ENCODE measurements at regions of chr13 and their contacts with region 1.

Region 1: DNA sequence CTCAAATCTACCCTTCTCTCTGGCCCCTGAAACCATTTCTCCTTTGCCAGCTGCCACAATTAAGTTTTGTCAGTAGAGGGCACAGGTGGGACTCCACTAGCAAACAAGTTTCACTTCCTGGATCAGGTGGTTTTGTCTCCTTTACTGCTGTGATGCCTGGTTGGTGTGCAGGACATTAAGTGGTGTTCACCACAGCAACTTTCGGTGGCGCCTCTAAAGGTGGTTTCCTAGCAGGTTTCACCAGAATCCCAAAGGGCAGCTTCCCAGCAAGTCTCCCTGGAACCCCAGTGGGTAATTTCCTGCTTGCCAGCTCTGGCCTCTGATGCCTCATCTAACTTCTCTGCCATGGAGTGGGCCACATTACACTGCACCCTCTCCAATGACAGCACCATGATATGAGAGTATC is 16.6 kb downstream of the MED4 start:
- DNase-seq: peak; percentile 67
- ATAC-seq: peak; percentile 93
- H3K4me3 Mint-ChIP-seq: no peak overlapping the region
- H3K27ac Mint-ChIP-seq: peak overlapping the region; percentile 77
- H3K4me1 Mint-ChIP-seq: peaks cover 12% of the 10 kb centered on the region
- H3K27me3 Mint-ChIP-seq: no peaks in the 10 kb centered on the region

Region 2: DNA sequence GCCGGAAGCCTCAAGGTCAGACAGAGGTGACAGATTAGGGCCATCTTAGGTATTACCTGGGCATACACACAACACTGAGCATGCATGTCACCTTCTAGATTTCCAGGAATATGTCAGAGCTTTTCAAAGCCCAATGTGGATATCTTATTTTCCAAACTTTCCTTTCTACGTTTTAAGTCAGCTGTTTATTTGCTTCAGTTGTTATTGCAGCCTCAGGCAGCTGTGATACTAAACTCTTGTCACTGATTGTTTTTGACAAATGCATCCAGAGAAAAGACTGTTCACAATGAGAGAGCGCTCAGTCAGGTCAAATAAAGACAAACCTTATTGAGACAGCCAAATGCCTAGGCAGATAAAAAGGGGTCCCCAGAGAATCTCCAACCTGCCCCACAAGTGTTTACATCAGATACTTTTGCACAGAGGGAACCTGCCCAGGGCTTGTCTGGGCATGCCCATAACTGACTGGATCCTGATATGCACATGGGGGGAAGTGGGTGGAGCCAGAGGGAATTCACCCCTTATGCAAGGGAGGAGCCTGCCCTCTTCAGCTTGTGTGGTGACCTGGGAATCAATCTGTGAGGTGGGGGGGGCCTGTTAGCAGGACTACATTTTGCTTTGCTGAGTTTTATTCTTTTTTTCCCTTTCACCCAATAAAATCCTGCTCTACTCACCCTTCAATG is 11.8 kb before region 1 on chr13:
- CTCF ChIA-PET with region 1: interaction called, 13 read pairs
- POLR2A ChIA-PET with region 1: no interaction called
- DNase-seq: peak; percentile 76
- ATAC-seq: peak; percentile 94
- H3K4me3 Mint-ChIP-seq: no peak overlapping the region
- H3K27ac Mint-ChIP-seq: peak overlapping the region; percentile 87
- H3K4me1 Mint-ChIP-seq: peaks cover 19% of the 10 kb centered on the region
- H3K27me3 Mint-ChIP-seq: no peaks in the 10 kb centered on the region

Region 3: DNA sequence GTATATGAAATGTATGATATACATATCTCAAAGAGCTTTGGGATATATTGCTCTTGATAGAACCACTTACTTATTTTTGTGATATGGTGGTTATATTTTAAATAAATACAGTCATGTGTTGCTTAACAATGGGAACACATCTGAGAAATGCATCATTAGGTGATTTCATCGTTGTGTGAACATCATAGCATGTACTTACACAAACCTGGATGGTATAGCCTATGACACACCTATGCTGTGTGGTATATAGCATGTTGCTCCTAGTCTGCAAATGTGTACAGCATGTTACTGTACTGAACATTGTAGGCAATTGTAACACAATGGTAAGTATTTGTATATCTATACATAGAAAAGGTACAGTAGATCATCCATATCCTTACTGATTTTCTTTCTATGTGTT is 233.0 kb after region 1 on chr13:
- CTCF ChIA-PET with region 1: no interaction called
- POLR2A ChIA-PET with region 1: no interaction called
- DNase-seq: no peak
- ATAC-seq: no peak
- H3K4me3 Mint-ChIP-seq: no peak overlapping the region
- H3K27ac Mint-ChIP-seq: no peak overlapping the region
- H3K4me1 Mint-ChIP-seq: peaks cover 20% of the 10 kb centered on the region
- H3K27me3 Mint-ChIP-seq: no peaks in the 10 kb centered on the region

Measured in activated CD8-positive, alpha-beta T cell treated with anti-CD3 and anti-CD28 coated beads, Interleukin-2, amount 10 ng/mL, durations not matched to agents 7 days and 5 days (primary cell).